ENCODE measurements at regions of chr12 and their contacts with region 1.

Region 1: GRCh38 chr12:121793838-121794533 is 498 bp upstream of the RHOF start:
- DNase-seq: peak; percentile 94 to 98 (median 95)
- H3K4me3 ChIP-seq: peak overlapping the region; percentile 67 to 99
- H3K4me3 Mint-ChIP-seq: peak overlapping the region; percentile 78 to 94 (median 87)
- H3K27ac ChIP-seq: peak overlapping the region; percentile 97
- H3K27ac Mint-ChIP-seq: peak overlapping the region; percentile 97 to 99 (median 97)
- H3K4me1 ChIP-seq: peaks cover 64% of the 10 kb centered on the region
- H3K4me1 Mint-ChIP-seq: peaks cover 32 to 72% (median 54%) of the 10 kb centered on the region in 4 donors
- H3K27me3 ChIP-seq: no peaks in the 10 kb centered on the region
- H3K27me3 Mint-ChIP-seq: no peaks in the 10 kb centered on the region

Region 2: GRCh38 chr12:120984351-120984898 is 809.6 kb before region 1 on chr12:
- CTCF ChIA-PET with region 1: no interaction called
- POLR2A ChIA-PET with region 1: no interaction called
- intact Hi-C with region 1: no loop called
- DNase-seq: no peak
- H3K4me3 ChIP-seq: no peak overlapping the region
- H3K4me3 Mint-ChIP-seq: no peak overlapping the region
- H3K27ac ChIP-seq: no peak overlapping the region
- H3K27ac Mint-ChIP-seq: peak overlapping the region in 4 of 7 donors; percentile 8 to 37 (median 19)
- H3K4me1 ChIP-seq: no peaks in the 10 kb centered on the region
- H3K4me1 Mint-ChIP-seq: no peaks in the 10 kb centered on the region
- H3K27me3 ChIP-seq: no peaks in the 10 kb centered on the region
- H3K27me3 Mint-ChIP-seq: no peaks in the 10 kb centered on the region

Region 3: GRCh38 chr12:121579981-121580868 is 213.8 kb before region 1 on chr12:
- CTCF ChIA-PET with region 1: interaction called, 4 read pairs
- POLR2A ChIA-PET with region 1: interaction called, 11 read pairs
- intact Hi-C with region 1: loop called (anchors 5 kb)
- DNase-seq: peak; percentile 74 to 86 (median 77)
- H3K4me3 ChIP-seq: peak overlapping the region; percentile 63 to 87
- H3K4me3 Mint-ChIP-seq: peak overlapping the region; percentile 95 to 99 (median 98)
- H3K27ac ChIP-seq: peak overlapping the region; percentile 71
- H3K27ac Mint-ChIP-seq: peak overlapping the region; percentile 92 to 99 (median 98)
- H3K4me1 ChIP-seq: peaks cover 53% of the 10 kb centered on the region
- H3K4me1 Mint-ChIP-seq: peaks cover 21 to 65% (median 44%) of the 10 kb centered on the region in 4 donors
- H3K27me3 ChIP-seq: no peaks in the 10 kb centered on the region
- H3K27me3 Mint-ChIP-seq: no peaks in the 10 kb centered on the region

Region 4: DNA sequence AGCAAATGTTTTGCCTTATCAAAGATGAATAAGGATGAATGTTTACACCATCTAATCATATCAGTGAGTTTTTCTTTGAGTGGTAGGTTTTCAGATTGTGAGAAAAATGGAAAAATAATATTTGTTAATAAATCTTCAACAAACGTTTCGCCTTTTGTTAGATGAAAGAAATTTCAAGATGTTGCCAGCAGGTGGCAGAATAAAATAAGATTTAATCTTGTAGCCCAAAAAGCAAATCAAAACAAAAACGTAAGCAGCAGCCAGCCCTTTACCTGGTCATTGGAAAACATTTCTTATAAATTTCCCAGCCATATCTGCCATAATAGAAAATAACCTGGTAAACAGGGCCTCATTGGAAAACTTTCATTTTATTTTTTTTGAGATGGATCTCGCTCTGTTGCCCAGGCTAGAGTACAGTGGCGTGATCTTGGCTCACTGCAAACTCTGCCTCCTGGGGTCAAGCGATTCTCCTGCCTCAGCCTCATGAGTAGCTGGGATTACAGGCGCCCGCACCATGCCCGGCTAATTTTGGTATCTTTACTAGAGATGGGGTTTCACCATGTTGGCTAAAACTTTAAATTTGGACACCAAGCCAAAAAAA is 96.8 kb before region 1 on chr12:
- CTCF ChIA-PET with region 1: interaction called, 90 read pairs
- POLR2A ChIA-PET with region 1: interaction called, 12 read pairs
- intact Hi-C with region 1: loop called (anchors 1 kb)
- DNase-seq: peak in 4 of 5 donors; percentile 61 to 70 (median 67)
- H3K4me3 ChIP-seq: no peak overlapping the region
- H3K4me3 Mint-ChIP-seq: no peak overlapping the region
- H3K27ac ChIP-seq: no peak overlapping the region
- H3K27ac Mint-ChIP-seq: peak overlapping the region in 1 of 7 donors; percentile 19
- H3K4me1 ChIP-seq: no peaks in the 10 kb centered on the region
- H3K4me1 Mint-ChIP-seq: peaks cover 0 to 5% (median 2%) of the 10 kb centered on the region in 4 donors
- H3K27me3 ChIP-seq: no peaks in the 10 kb centered on the region
- H3K27me3 Mint-ChIP-seq: no peaks in the 10 kb centered on the region

Region 5: GRCh38 chr12:121773011-121773777 is 20.8 kb before region 1 on chr12:
- CTCF ChIA-PET with region 1: interaction called, 559 read pairs
- POLR2A ChIA-PET with region 1: interaction called, 2,727 read pairs
- intact Hi-C with region 1: loop called (anchors 1 kb)
- DNase-seq: peak; percentile 76 to 82 (median 78)
- H3K4me3 ChIP-seq: no peak overlapping the region
- H3K4me3 Mint-ChIP-seq: no peak overlapping the region
- H3K27ac ChIP-seq: no peak overlapping the region
- H3K27ac Mint-ChIP-seq: peak overlapping the region; percentile 68 to 87 (median 78)
- H3K4me1 ChIP-seq: peaks cover 23% of the 10 kb centered on the region
- H3K4me1 Mint-ChIP-seq: peaks cover 5 to 14% (median 11%) of the 10 kb centered on the region in 4 donors
- H3K27me3 ChIP-seq: no peaks in the 10 kb centered on the region
- H3K27me3 Mint-ChIP-seq: no peaks in the 10 kb centered on the region

Region 6: DNA sequence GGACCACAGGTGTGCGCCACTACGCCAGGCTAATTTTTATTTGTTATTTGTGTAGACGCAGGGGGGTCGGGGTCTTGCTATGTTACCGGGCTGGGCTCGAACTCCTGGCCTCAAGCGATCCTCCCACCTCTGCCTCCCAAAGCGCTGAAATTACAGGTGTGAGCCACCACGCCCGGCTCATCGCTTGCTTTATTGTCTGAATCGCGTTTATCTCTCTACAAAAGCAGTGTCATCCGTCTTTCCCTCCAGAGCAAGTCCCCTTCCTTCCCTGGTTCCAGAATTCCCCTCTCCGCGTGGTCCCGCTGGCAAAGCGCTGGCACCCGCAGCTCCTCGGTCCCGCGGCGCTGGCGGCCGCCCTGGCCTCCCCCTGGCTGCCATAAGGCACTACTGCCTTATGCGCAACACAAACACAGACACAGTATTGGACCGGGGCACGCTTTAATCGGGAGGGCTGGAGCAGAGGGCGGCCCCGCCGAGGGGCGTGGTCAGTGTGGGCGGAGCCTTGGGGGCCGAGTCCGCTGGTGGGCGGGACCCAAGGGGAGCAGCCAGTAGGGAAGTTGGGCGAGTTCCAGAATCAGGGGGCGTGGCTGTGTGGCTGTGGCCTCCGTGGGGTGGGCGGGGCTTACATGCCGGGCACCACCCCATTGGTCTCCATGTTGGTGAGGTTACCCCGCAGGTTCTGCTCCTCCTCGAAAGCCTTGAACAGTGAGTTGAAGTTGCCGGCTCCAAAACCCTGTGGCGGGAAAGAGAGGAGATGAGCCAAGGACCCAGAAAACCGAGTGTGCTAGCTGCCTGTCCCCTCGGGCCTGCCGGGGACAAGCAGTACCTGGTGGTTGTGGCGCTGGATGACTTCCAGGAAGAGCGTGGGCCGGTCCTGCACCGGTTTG is 45.4 kb after region 1 on chr12:
- CTCF ChIA-PET with region 1: interaction called, 51 read pairs
- POLR2A ChIA-PET with region 1: interaction called, 13 read pairs
- intact Hi-C with region 1: loop called (anchors 2 kb)
- DNase-seq: peak; percentile 99 to 100 (median 99)
- H3K4me3 ChIP-seq: peak overlapping the region; percentile 70 to 95
- H3K4me3 Mint-ChIP-seq: peak overlapping the region; percentile 96 to 99 (median 99)
- H3K27ac ChIP-seq: peak overlapping the region; percentile 46
- H3K27ac Mint-ChIP-seq: peak overlapping the region; percentile 86 to 97 (median 93)
- H3K4me1 ChIP-seq: peaks cover 9% of the 10 kb centered on the region
- H3K4me1 Mint-ChIP-seq: peaks cover 10 to 23% (median 14%) of the 10 kb centered on the region in 4 donors
- H3K27me3 ChIP-seq: no peaks in the 10 kb centered on the region
- H3K27me3 Mint-ChIP-seq: no peaks in the 10 kb centered on the region

Region 7: DNA sequence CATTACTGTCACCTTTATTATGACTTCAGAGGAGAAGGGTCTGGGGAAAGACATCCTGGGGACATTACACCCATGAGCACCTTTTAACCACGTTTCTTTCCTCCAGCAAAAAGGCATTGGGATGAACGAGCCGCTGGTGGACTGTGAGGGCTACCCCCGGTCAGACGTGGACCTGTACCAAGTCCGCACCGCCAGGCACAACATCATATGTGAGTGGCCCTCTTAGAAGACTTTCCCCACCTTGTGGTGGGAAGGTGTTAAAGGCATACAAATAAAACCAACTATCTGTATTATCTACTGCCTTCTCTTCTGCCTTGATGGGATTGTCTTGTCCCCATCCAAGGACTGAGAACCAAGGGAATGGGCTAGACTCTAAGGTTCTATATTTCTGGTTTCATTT is 100.6 kb after region 1 on chr12:
- CTCF ChIA-PET with region 1: interaction called, 119 read pairs
- POLR2A ChIA-PET with region 1: interaction called, 117 read pairs
- intact Hi-C with region 1: loop called (anchors 1 kb)
- DNase-seq: no peak
- H3K4me3 ChIP-seq: no peak overlapping the region
- H3K4me3 Mint-ChIP-seq: peak overlapping the region in 2 of 8 donors; percentile 7 to 57
- H3K27ac ChIP-seq: no peak overlapping the region
- H3K27ac Mint-ChIP-seq: peak overlapping the region in 5 of 7 donors; percentile 9 to 85 (median 74)
- H3K4me1 ChIP-seq: peaks cover 27% of the 10 kb centered on the region
- H3K4me1 Mint-ChIP-seq: peaks cover 12 to 36% (median 27%) of the 10 kb centered on the region in 4 donors
- H3K27me3 ChIP-seq: no peaks in the 10 kb centered on the region
- H3K27me3 Mint-ChIP-seq: no peaks in the 10 kb centered on the region

Region 8: DNA sequence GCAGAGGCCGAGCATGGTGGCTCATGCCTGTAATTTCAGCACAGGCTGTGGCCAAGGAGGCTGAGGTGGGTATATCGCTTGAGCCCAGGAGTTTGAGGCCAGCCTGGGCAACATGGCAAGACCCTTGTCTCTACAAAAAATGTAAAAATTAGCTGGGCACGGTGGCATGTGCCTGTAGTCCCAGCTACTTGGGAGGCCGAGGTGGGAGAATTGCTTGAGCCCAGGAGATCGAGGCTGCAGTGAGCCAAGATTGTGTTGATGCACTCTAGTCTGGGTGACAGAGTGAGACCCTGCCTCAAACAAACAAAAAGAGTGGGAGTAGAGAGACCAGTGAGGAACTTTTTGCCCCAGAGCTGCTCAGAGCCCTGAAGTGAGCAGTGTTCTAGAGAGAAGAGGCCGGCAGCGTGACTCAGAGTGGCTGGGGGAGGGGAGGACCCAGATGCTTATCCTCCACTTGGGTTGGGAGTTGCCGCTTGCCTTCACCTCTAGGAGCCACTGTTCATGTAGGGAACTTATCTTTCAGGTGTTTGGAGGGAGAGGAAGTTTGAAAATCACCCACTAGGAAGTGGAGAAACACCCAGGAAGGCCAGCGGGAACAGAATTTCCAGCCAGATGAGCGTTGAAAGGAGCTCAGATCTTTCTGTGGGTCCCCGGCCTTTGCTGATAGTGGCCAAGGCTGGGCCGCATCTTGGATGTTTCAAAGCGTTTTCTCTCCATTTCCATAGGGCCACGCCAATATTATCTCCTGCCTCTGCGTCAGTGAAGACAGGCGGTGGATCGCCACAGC is 139.7 kb after region 1 on chr12:
- CTCF ChIA-PET with region 1: no interaction called
- POLR2A ChIA-PET with region 1: no interaction called
- intact Hi-C with region 1: no loop called
- DNase-seq: no peak
- H3K4me3 ChIP-seq: no peak overlapping the region
- H3K4me3 Mint-ChIP-seq: no peak overlapping the region
- H3K27ac ChIP-seq: no peak overlapping the region
- H3K27ac Mint-ChIP-seq: no peak overlapping the region
- H3K4me1 ChIP-seq: no peaks in the 10 kb centered on the region
- H3K4me1 Mint-ChIP-seq: peaks cover 0 to 3% (median 1%) of the 10 kb centered on the region in 4 donors
- H3K27me3 ChIP-seq: no peaks in the 10 kb centered on the region
- H3K27me3 Mint-ChIP-seq: no peaks in the 10 kb centered on the region

Measured in CD4-positive, alpha-beta memory T cell (primary cell).